Dorsolateral prefrontal cortex (tissue), 120 donors: ENCODE measurements at regions of chrX and their contacts with region 1.

Region 1: DNA sequence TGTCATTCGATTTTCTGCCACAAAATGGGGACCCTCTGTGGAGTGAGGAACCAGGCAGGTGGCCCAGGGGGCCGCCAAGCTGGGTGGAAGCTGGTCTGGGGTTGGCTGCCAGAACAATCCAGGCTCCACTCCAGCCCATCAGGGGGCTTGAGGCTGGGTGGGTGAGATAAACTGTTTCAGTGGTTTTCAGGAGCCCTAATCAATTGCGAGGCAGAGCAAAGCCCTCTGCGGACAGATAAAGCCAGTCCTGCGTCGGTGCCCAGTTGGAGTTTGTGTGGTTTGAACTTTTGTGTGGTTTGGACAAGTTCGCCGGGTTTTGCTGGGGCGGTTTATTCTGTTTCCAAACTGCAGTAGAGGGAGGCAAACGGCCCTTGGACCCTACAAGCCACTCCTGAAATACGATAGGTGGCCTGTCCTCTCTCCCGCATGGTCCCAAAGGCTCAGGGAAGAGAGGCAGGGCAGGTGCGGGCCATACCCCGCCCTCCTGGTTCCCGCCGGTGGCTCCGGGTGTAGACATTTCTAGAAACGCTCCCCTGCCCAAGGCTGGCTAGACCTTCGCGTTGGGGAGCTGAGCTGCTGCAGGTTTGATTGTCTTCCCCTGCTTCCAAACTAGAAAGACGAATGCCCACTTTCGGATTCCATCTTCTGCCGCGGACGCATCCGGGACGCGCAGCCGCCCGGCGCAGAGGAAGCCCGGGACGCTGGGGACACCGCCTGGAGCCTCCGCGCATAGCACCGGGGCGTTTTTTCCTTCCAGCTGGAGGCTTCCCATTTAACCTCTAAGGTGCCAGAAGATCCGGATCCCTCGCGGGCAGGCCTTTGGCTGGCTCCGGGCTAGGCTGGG is 169.0 kb upstream of the BCOR start:
- DNase-seq: peak; percentile 39 to 75 (median 53)
- H3K4me3 ChIP-seq: peak overlapping the region; percentile 16 to 75 (median 56)
- H3K27ac ChIP-seq: peak overlapping the region in 44 of 59 donors; percentile 9 to 80 (median 54)
- H3K27me3 ChIP-seq: peaks cover 0 to 74% (median 19%) of the 10 kb centered on the region in 45 donors
- CTCF ChIP-seq: peak; percentile 11 to 76 (median 62)

Region 2: DNA sequence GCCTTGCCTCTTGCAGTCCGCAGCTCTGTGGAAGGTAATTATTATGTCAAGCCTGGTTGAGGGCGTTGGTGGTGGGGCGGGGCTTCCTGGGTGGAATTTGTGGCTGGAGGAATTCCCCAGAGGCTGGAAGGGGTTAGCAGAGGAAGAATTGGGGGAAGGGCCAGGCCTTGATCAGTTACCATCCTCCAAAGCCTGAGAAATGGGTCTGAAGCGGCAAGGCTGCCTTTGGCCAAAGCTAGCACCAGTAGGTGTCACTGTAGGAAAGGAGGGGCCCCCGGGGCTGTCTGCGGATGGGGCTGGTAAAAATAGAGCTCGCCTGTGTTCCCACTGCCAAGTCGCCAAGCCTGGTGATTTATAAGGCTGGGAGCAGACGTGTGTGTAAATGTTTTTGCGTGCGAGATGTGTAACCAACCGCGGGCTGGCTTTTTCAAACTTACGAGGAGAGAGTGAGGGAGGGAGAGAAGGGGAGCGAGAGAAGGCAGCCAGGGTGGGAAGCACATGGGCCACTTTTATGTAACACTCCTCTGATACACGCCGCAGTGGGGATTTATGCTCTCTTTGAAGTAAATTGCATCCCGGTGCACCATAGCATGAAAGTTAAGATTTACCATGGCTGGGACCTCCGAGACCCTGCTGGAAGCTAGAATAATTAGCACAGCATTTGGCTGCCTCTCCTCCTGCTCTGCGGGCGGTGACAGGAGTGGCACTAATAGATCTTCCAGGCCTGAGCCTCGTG is 535.9 kb before region 1 on chrX:
- intact Hi-C with region 1: loop called in 1 of 2 experiments (anchors 10 kb)
- DNase-seq: peak; percentile 35 to 72 (median 64)
- H3K4me3 ChIP-seq: peak overlapping the region in 14 of 59 donors; percentile 2 to 30 (median 16)
- H3K27ac ChIP-seq: peak overlapping the region in 15 of 59 donors; percentile 1 to 74 (median 56)
- H3K27me3 ChIP-seq: peaks cover 0 to 88% (median 31%) of the 10 kb centered on the region in 45 donors
- CTCF ChIP-seq: peak in 55 of 56 donors; percentile 20 to 74 (median 55)

Region 3: DNA sequence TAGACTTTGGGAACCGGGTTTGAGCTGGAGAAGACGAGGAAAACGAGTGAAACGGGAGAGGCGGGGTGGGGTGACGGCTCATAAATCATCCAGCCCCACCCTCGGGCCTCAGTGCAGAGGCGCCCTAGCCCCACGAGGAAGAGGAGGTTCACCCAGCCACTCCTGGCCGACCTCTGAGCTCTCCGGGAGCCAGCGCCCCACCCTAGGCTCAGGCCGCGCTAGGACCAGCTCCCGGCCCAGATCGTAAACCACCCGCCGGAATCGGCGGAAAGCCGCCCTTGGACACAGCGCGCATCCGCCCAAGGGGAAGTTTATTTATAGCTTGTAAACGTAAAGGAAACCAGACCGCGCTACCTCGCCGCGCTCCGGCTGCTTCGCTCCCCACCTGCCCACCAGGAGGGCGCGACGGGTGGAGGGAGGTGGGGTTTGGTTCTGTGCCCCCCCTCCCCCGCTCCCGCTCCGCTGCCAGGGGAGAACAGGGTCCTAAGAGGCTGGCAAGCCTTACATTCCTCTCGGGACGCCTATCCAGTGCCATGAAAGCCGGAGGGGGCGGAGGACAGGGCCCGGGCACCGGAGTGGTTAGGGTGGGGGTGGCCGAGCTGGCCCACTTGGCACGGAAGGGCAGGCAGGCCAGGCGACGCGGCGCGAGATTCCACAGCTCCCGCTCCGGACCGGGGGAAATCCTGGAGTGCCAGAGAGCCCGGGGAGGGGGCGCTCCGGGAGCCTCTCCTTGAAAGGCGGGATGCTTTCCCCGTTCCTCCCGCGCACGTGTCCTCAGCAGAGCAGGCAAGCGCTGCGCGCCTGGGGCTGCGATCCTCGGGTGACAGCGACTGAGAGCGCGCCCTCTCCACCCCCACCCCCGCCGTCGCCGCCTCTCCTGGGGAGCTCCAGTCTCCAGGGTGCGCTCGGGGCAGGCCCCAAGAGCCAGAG is 253.2 kb before region 1 on chrX:
- intact Hi-C with region 1: loop called in 1 of 2 experiments (anchors 5 kb)
- DNase-seq: peak in 8 of 10 donors; percentile 18 to 71 (median 55)
- H3K4me3 ChIP-seq: peak overlapping the region; percentile 23 to 71 (median 56)
- H3K27ac ChIP-seq: peak overlapping the region in 56 of 59 donors; percentile 41 to 89 (median 81)
- H3K27me3 ChIP-seq: peaks cover 0 to 88% (median 37%) of the 10 kb centered on the region in 45 donors
- CTCF ChIP-seq: peak in 1 of 56 donors; percentile 14

Region 4: DNA sequence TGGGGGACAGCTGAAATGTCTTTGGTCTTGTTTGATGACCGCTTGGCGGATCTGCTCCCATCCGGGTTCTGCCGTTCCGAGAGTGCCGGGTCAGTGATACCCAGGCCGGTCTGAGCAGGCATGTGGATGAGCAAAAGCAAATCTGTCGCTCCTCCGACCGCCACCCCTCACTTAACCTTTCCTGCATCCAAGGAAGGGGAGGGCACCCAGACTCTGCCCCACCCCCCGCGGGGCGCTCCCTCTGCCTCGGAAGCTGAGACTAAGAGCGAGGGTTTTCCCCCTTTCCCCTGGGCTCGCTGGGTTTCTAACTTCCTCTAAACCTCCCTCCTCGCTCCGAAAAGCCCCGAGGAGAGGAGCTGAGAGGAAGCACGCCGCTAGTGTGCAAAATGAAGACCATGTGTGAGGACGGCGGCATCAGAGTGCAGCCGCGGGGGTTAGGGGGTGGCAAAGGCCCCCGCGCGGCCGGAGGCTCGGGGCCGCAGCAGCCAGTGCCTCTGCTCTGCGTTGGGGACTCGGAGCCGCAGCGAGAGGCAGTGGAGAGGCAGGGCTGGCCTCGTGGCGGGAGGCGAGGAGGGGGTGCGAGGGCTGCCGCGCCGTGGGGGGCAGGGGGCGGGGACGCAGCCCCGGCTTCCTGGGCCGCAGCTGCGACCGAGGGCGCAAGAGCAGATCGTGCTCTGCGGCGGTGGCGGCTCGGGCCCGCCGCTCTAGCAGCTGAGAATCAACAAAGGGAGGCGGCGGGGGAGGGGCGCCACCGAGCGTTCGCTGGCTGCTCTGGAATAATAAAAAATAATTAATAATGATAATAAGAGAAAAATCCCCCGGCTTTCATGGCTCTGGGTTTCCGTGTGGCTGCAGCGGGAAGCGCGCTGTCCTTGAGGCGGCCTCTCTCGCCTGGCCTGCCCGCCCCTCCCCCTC is 113.1 kb before region 1 on chrX:
- intact Hi-C with region 1: loop called in 1 of 2 experiments (anchors 10 kb)
- DNase-seq: peak in 3 of 10 donors; percentile 25 to 66 (median 46)
- H3K4me3 ChIP-seq: peak overlapping the region; percentile 20 to 70 (median 54)
- H3K27ac ChIP-seq: peak overlapping the region in 58 of 59 donors; percentile 12 to 88 (median 82)
- H3K27me3 ChIP-seq: peaks cover 0 to 100% (median 73%) of the 10 kb centered on the region in 45 donors
- CTCF ChIP-seq: peak in 39 of 56 donors; percentile 7 to 58 (median 36)

Region 5: DNA sequence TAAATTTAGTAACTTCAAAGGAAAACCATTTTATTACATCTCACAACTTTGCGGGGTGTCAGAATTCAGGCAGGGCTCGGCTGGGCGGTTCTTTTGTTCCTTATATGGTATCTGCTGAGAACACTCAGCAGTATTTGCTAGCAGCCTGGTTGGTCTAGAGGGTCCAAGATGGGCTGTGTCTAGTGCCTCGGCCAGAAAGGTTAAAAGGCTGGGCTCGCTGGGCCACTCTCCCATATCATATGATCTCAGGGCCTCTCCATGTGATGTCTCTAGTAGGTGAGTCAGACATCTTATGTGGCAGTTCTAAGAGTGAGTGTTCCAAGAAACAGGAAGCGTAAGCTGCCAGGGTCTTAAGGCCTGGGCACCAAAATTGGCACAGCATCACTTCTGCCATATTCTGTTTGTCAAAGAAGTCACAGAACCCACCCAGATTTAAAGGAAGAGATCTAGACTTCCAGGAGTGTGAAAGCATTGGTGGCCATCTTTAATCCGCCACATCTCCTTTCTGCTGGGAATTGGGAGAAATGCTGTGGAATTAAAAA is 213.1 kb after region 1 on chrX:
- intact Hi-C with region 1: loop called in 1 of 2 experiments (anchors 5 kb)
- DNase-seq: no peak
- H3K4me3 ChIP-seq: no peak overlapping the region
- H3K27ac ChIP-seq: no peak overlapping the region
- H3K27me3 ChIP-seq: peaks cover 0 to 84% (median 24%) of the 10 kb centered on the region in 45 donors
- CTCF ChIP-seq: no peak

Region 6: DNA sequence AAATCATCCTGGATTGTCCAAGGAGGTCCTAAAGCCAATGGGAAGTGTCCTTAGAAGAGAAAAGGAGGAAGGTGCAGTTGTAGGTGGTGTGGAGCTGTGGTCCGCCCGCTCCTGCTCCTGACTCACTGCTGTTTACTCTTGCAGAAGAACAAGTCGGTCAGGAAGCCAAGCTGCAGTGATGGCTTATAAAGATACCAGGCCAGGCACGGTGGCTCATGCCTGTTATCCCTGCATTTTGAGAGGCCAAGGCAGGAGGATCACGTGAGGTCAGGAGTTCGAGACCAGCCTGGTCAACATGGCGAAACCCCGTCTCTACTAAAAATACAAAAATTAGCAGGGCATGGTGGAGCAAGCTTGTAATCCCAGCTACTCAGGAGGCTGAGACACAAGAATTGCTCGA is 247.7 kb after region 1 on chrX:
- intact Hi-C with region 1: no loop called
- DNase-seq: no peak
- H3K4me3 ChIP-seq: no peak overlapping the region
- H3K27ac ChIP-seq: no peak overlapping the region
- H3K27me3 ChIP-seq: peaks cover 0 to 87% (median 22%) of the 10 kb centered on the region in 45 donors
- CTCF ChIP-seq: no peak